ENCODE measurements at regions of chr2 and their contacts with region 1.

Region 1: DNA sequence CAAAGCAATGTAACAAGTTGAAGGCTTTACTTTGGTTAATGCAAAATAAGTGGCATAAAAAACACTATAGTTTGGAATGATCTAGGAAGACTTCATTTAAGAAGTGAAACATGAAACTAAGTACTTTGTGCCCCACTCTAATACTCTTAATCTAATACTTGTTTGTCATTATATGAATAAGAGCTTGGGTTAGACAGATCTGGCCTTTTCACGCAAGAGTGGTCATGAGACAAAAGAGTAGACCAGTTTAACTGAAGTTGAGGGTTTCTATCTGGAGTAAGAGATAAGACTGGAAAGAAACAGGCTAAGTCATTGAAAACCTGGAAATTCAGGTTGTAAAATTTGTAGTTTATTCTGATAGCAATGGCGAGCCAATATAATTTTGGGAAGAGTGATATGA is 2.8 kb downstream of the SLC30A6 start:
- DNase-seq: no peak
- H3K4me3 ChIP-seq: no peak overlapping the region
- H3K27ac ChIP-seq: no peak overlapping the region
- H3K4me1 ChIP-seq: peaks cover 7% of the 10 kb centered on the region
- H3K27me3 ChIP-seq: no peaks in the 10 kb centered on the region
- CTCF ChIP-seq: no peak

Region 2: DNA sequence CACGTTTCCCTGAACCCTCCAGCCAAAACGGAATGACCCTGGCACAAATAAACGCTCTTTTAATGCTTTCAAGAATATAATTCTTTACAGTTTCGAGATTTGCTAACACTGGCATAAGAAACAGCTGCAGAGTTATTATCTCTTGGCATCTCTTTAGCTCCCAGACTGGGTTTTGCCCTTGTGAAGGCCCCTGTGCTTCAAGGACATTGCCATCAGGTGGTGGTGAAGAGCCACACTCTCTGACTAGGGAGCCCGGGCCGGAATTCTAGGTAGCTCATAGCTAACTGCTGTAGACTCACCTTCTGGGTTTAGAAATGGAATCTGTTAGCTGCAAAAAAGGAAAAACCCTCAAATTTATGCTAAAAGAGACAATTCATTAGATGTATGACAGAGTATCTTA is 1017.0 kb before region 1 on chr2:
- CTCF ChIA-PET with region 1: no interaction called
- POLR2A ChIA-PET with region 1: interaction called, 11 read pairs
- intact Hi-C with region 1: no loop called
- DNase-seq: no peak
- H3K4me3 ChIP-seq: no peak overlapping the region
- H3K27ac ChIP-seq: no peak overlapping the region
- H3K4me1 ChIP-seq: no peaks in the 10 kb centered on the region
- H3K27me3 ChIP-seq: peaks cover 6% of the 10 kb centered on the region
- CTCF ChIP-seq: 0 out of 2 replicates have a peak, but pooled peaks have one; percentile 25

Region 3: DNA sequence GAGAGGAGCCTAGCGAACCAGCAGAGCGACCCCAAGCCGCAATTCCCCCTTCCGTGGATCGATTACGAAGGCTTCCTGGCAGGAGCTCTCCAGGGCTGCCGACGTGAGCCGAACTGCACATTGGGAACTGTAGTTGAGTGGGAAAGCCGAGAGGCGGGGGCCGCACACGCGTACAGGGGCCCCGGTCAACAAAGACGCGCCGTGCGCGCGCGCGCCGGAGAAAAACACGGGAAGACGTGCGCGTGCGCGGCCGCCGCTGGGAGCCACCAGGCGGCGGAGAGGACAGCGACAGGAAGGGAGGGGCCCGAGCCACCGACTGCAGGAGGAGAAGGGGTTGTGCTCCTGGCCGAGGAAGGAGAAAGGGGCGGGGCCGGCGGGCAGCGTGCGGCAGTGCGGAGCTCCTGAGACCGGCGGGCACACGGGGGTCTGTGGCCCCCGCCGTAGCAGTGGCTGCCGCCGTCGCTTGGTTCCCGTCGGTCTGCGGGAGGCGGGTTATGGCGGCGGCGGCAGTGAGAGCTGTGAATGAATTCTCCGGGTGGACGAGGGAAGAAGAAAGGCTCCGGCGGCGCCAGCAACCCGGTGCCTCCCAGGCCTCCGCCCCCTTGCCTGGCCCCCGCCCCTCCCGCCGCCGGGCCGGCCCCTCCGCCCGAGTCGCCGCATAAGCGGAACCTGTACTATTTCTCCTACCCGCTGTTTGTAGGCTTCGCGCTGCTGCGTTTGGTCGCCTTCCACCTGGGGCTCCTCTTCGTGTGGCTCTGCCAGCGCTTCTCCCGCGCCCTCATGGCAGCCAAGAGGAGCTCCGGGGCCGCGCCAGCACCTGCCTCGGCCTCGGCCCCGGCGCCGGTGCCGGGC is 105.0 kb before region 1 on chr2 and contains the start of gene SPAST:
- CTCF ChIA-PET with region 1: no interaction called
- POLR2A ChIA-PET with region 1: interaction called, 16 read pairs
- intact Hi-C with region 1: no loop called
- DNase-seq: peak; percentile 99
- H3K4me3 ChIP-seq: peak within 1 kb of the TSS; percentile 78
- H3K27ac ChIP-seq: peak within 1 kb of the TSS; percentile 89
- H3K4me1 ChIP-seq: peaks cover 7% of the 10 kb centered on the region
- H3K27me3 ChIP-seq: no peaks in the 10 kb centered on the region
- CTCF ChIP-seq: peak; percentile 49
- total RNA-seq, gene SPAST: 40.2 and 40.6 TPM in 2 replicates

Region 4: DNA sequence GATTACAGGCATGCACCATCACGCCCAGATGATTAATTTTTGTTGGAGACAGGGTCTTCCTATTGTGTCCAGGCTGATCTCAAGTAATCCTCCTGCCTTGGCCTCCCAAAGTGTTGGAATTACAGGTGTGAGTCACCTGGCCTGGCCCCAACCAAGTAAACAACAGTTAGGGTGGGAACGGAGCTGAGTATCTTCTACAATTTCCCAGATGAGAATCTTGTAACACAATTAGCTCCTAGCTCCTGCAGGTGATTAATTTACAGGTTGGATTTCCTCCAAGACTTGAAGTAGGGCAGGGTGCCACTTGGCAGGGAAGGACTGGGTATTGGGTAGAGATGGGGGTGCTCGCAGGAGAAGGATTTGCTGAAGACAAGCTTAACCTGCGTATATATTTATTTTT is 78.4 kb after region 1 on chr2:
- CTCF ChIA-PET with region 1: no interaction called
- POLR2A ChIA-PET with region 1: no interaction called
- intact Hi-C with region 1: no loop called
- DNase-seq: no peak
- H3K4me3 ChIP-seq: no peak overlapping the region
- H3K27ac ChIP-seq: no peak overlapping the region
- H3K4me1 ChIP-seq: no peaks in the 10 kb centered on the region
- H3K27me3 ChIP-seq: no peaks in the 10 kb centered on the region
- CTCF ChIP-seq: no peak